ENCODE measurements at regions of chr7 and their contacts with region 1.

Region 1: GRCh38 chr7:142469696-142470543 is 212.1 kb upstream of the PRSS58 start:
- DNase-seq: no peak
- ATAC-seq: no peak
- H3K4me3 ChIP-seq: no peak overlapping the region
- H3K27ac ChIP-seq: no peak overlapping the region
- H3K4me1 ChIP-seq: no peaks in the 10 kb centered on the region
- H3K27me3 ChIP-seq: peaks cover 3% of the 10 kb centered on the region; the same call in 1 of the 2 replicates
- CTCF ChIP-seq: no peak

Region 2: DNA sequence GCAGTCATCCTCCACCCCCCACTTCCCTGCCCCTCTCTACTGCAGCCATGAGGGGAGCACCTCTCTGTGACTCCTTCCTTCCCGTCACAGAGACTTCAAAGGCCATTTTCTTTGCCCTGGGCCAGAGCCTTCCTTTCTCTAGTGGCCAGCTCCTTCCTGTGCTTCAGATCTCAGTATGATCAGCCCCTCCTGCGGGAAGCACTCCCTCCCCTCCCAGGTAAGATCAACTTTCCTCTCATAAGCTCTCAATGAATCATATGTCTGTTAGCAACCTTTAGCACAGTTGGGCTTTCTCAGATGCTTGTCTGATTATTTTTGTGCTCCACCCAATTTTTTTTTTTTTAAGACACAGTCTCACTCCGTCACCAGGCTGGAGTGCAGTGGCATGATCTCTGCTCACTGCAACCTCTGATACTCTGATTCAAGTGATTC is 38.4 kb after region 1 on chr7:
- CTCF ChIA-PET with region 1: no interaction called
- POLR2A ChIA-PET with region 1: no interaction called
- in situ Hi-C with region 1: no loop called
- intact Hi-C with region 1: loop called (anchors 5 kb)
- DNase-seq: no peak
- ATAC-seq: no peak
- H3K4me3 ChIP-seq: no peak overlapping the region
- H3K27ac ChIP-seq: no peak overlapping the region
- H3K4me1 ChIP-seq: no peaks in the 10 kb centered on the region
- H3K27me3 ChIP-seq: peaks cover 5% of the 10 kb centered on the region
- CTCF ChIP-seq: no peak

Region 3: GRCh38 chr7:143305423-143306070 is 835.6 kb after region 1 on chr7:
- CTCF ChIA-PET with region 1: interaction called, 17 read pairs
- POLR2A ChIA-PET with region 1: no interaction called
- in situ Hi-C with region 1: no loop called
- intact Hi-C with region 1: no loop called
- DNase-seq: no peak
- ATAC-seq: peak; percentile 89
- H3K4me3 ChIP-seq: no peak overlapping the region
- H3K27ac ChIP-seq: no peak overlapping the region
- H3K4me1 ChIP-seq: no peaks in the 10 kb centered on the region
- H3K27me3 ChIP-seq: no peaks in the 10 kb centered on the region
- CTCF ChIP-seq: peak; percentile 87